Right ventricle myocardium superior (tissue), 1 donor: ENCODE measurements at regions of chr19 and their contacts with region 1.

Region 1: GRCh38 chr19:44164673-44165512 is at the start of gene ZNF226:
- DNase-seq: peak; percentile 89
- ATAC-seq: peak; percentile 100
- total RNA-seq, gene ZNF226: 14.9 TPM

Region 2: GRCh38 chr19:44212250-44212865 is 47.5 kb after region 1 on chr19 and contains the start of gene ZNF227:
- intact Hi-C with region 1: loop called (anchors 5 kb)
- DNase-seq: peak; percentile 95
- ATAC-seq: peak; percentile 98
- total RNA-seq, gene ZNF227: 12.6 TPM